ENCODE measurements at regions of chr1 and their contacts with region 1.

Region 1: DNA sequence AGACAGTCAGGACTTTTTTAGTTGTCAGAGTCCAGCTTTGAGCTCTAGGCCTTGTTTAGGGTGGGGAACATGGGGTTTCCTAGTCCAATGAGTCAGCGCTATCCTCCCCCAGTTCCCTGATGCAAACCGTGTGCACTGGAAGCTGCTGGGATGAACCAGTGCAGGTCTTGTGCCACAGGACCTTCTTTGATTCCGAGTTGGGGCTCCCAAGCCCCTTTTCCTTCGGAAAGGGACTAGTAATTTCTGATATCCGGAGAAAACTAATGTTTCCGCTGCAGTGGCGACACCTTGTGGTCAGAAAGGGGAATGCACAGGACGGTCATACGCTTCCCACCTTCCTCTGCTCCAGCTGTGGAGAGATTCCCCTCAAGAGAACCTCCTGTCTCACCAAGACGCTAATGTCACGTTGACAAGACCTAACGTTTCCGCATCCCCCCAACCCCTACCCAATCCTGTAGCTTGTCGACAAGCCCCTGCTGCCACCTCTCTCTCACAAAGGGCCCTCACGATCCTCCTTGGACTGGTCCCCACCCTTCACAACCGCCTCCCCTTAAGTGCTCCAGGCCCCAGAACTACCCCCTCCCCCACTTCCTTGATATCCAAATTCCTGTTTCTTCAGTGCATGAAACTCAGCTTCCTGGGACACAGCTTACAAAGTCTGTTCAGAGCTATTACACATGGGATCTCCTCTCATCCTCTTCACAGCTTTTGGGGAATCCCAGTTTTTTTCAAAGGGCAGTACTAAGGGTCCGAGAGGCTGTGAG is 30.9 kb downstream of the GPA33 start:
- DNase-seq: peak; percentile 89
- H3K4me3 Mint-ChIP-seq: no peak overlapping the region
- H3K27ac Mint-ChIP-seq: peak overlapping the region; percentile 38
- H3K4me1 Mint-ChIP-seq: peaks cover 11% of the 10 kb centered on the region
- H3K27me3 Mint-ChIP-seq: no peaks in the 10 kb centered on the region

Region 2: DNA sequence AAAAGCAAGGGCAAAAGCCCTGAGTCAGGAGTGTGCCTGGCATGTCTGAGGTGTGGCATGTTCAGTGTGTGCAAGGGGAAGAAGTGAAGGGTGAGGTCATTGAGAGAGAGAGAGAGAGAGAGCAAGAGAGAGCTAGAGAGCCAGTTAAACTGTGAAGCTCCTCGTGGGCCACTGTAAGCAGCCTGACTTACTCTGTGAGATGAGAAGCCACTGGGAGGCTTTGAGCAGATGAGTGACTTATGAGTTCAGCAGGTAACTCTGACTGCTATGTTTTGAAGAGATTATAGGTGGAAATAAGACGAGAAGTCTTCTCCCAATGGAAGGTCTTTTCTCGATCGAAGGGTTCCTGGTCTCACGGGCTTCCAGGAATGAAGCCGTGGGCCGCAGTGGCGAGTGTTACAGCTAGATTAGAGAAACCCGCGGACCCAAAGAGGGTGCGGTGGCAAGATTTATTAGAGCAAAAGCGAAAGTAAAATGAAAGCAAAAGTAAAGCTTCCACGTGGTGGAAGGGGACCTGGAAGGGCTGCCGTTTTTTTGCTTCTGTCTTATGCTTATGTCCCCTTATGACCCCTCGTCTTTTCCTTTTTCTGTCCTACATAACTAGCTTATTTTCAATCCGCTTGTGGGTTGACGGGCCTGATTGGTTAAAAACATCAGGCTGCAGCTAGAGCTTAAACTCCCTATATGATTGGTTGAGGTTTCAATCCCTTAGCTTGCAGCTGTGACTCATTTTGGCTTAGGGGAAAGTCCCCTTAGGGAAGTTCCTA is 569.4 kb before region 1 on chr1:
- CTCF ChIA-PET with region 1: interaction called, 3 read pairs
- intact Hi-C with region 1: loop called (anchors 10 kb)
- DNase-seq: peak; percentile 68
- H3K4me3 Mint-ChIP-seq: no peak overlapping the region
- H3K27ac Mint-ChIP-seq: no peak overlapping the region
- H3K4me1 Mint-ChIP-seq: peaks cover 14% of the 10 kb centered on the region
- H3K27me3 Mint-ChIP-seq: no peaks in the 10 kb centered on the region

Region 3: GRCh38 chr1:166900987-166901386 is 158.2 kb before region 1 on chr1:
- CTCF ChIA-PET with region 1: interaction called, 635 read pairs
- intact Hi-C with region 1: no loop called
- DNase-seq: no peak
- H3K4me3 Mint-ChIP-seq: no peak overlapping the region
- H3K27ac Mint-ChIP-seq: no peak overlapping the region
- H3K4me1 Mint-ChIP-seq: peaks cover 3% of the 10 kb centered on the region
- H3K27me3 Mint-ChIP-seq: no peaks in the 10 kb centered on the region

Region 4: DNA sequence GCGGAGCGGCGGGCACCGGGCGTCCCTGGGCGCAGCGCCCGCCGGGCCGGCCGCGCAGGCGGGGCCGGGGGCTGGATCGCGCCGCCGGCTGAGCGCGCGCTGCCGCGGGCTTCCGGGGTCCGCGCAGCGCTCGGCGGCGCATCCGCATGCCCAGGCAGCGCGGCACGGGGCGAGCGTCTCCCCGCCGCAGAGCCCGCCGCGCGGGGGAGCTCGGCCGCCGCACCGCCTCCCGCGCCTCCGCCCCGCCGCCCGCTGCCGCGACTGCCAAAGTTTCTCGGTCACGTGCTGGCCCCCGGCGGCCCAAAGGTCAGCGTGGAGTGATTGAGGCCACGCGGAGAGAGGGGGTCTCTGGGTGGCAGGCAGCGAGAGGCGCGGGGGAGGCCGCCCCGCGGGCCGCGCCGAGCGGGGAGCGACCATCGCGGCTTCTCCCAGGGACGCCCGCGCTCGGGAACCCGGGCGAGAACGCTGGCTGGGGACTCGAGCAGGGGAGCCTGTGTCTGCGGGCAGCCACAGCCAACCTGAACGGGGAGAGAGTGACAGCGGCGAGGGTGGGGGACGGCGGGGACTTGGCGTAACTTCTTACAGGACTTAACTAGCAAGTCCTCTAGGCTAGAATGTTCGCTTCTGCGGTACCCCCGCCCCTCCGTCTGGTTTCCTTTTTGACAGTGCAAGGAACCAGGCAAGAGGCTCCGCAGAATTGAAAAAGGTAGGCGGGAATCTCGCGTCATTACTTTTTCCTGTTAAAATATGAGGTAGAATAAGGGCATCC is 83.7 kb before region 1 on chr1 and contains the start of gene ILDR2:
- CTCF ChIA-PET with region 1: interaction called, 32 read pairs
- intact Hi-C with region 1: loop called (anchors 1 kb)
- DNase-seq: peak; percentile 84
- H3K4me3 Mint-ChIP-seq: peak within 1 kb of the TSS; percentile 91
- H3K27ac Mint-ChIP-seq: peak within 1 kb of the TSS; percentile 90
- H3K4me1 Mint-ChIP-seq: peaks cover 36% of the 10 kb centered on the region
- H3K27me3 Mint-ChIP-seq: peaks cover 10% of the 10 kb centered on the region
- total RNA-seq, gene ILDR2: 9.1 to 10.5 TPM

Region 5: GRCh38 chr1:167121375-167122120 is 62.3 kb after region 1 on chr1:
- CTCF ChIA-PET with region 1: interaction called, 17 read pairs
- intact Hi-C with region 1: no loop called
- DNase-seq: peak; percentile 58
- H3K4me3 Mint-ChIP-seq: peak overlapping the region; percentile 81
- H3K27ac Mint-ChIP-seq: no peak overlapping the region
- H3K4me1 Mint-ChIP-seq: peaks cover 3% of the 10 kb centered on the region
- H3K27me3 Mint-ChIP-seq: peaks cover 2% of the 10 kb centered on the region

Region 6: GRCh38 chr1:167342846-167343245 is 283.6 kb after region 1 on chr1:
- CTCF ChIA-PET with region 1: no interaction called
- intact Hi-C with region 1: no loop called
- DNase-seq: no peak
- H3K4me3 Mint-ChIP-seq: no peak overlapping the region
- H3K27ac Mint-ChIP-seq: no peak overlapping the region
- H3K4me1 Mint-ChIP-seq: peaks cover 3% of the 10 kb centered on the region
- H3K27me3 Mint-ChIP-seq: no peaks in the 10 kb centered on the region

Region 7: GRCh38 chr1:168470901-168471431 is 1411.7 kb after region 1 on chr1:
- CTCF ChIA-PET with region 1: no interaction called
- intact Hi-C with region 1: no loop called
- DNase-seq: no peak
- H3K4me3 Mint-ChIP-seq: no peak overlapping the region
- H3K27ac Mint-ChIP-seq: no peak overlapping the region
- H3K4me1 Mint-ChIP-seq: peaks cover 47% of the 10 kb centered on the region
- H3K27me3 Mint-ChIP-seq: no peaks in the 10 kb centered on the region